ENCODE measurements at regions of chr17 and their contacts with region 1.

Region 1: DNA sequence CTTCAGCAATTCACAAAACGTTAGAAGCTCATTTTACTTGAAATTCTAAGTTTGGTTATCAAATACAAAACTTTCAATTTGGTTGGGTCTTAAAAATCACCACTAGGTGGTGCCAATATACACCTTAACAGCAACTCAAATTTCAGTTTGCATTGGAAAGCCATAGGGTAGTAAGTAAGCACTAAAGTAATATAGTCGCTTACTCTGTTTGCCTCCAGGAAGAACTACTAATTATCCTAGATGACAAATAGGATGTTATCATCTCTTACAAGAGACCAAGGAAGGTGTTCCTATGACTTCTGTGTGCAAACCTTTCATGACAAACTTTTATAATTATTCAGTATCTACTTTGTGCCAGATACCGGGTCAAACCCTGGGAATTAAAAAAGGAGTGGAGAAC is 93.3 kb downstream of the MYO1D start:
- DNase-seq: peak in 3 of 14 experiments; percentile 64 to 67 (median 67)
- ATAC-seq: peak; percentile 52
- H3K4me3 ChIP-seq: no peak overlapping the region
- H3K4me3 Mint-ChIP-seq: no peak overlapping the region
- H3K27ac ChIP-seq: no peak overlapping the region
- H3K27ac Mint-ChIP-seq: no peak overlapping the region
- H3K4me1 ChIP-seq: no peaks in the 10 kb centered on the region
- H3K4me1 Mint-ChIP-seq: no peaks in the 10 kb centered on the region
- H3K27me3 ChIP-seq: no peaks in the 10 kb centered on the region
- H3K27me3 Mint-ChIP-seq: no peaks in the 10 kb centered on the region
- CTCF ChIP-seq: peak; percentile 86

Region 2: DNA sequence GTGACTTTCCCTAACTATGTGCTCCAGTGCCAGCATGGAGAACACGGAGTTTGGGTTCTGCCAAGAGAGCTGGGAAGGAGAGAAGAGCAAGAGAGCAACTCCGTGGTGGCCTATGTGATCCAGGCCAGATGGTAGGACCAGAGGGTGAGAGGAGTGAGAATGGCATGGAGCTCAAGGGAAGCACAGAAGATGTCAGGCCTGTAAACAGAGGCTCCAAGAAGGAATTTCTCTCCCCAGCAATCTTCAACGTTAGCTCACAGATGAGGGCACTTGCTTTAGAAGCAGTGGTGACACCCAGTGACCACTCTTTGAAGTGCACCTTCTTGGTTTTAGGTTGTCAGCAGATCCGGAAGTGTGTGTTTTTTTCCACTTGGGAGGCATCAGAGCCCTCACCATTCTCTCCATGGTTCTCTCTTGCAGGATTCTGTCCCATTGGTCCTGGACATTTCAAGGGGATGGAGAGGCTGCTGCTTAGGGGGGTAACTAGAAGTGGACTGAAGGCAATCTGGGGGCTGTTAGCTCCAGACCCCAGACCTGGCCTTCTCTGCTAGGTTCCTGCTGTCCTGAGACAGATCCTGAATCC is 126.3 kb after region 1 on chr17:
- CTCF ChIA-PET with region 1: interaction called, 10 read pairs
- POLR2A ChIA-PET with region 1: interaction called, 3 read pairs
- intact Hi-C with region 1: loop called in 1 of 2 experiments (anchors 1 kb)
- DNase-seq: peak in 11 of 14 experiments; percentile 5 to 68 (median 22)
- ATAC-seq: peak; percentile 48
- H3K4me3 ChIP-seq: no peak overlapping the region
- H3K4me3 Mint-ChIP-seq: no peak overlapping the region
- H3K27ac ChIP-seq: no peak overlapping the region
- H3K27ac Mint-ChIP-seq: no peak overlapping the region
- H3K4me1 ChIP-seq: no peaks in the 10 kb centered on the region
- H3K4me1 Mint-ChIP-seq: no peaks in the 10 kb centered on the region
- H3K27me3 ChIP-seq: no peaks in the 10 kb centered on the region
- H3K27me3 Mint-ChIP-seq: peaks cover 24% of the 10 kb centered on the region
- CTCF ChIP-seq: peak; percentile 44

Region 3: GRCh38 chr17:32936894-32937500 is 153.4 kb after region 1 on chr17:
- CTCF ChIA-PET with region 1: interaction called, 4 read pairs
- POLR2A ChIA-PET with region 1: no interaction called
- intact Hi-C with region 1: loop called (anchors 1 kb)
- DNase-seq: peak; percentile 42 to 77 (median 54)
- ATAC-seq: peak; percentile 55
- H3K4me3 ChIP-seq: no peak overlapping the region
- H3K4me3 Mint-ChIP-seq: no peak overlapping the region
- H3K27ac ChIP-seq: no peak overlapping the region
- H3K27ac Mint-ChIP-seq: no peak overlapping the region
- H3K4me1 ChIP-seq: peaks cover 7% of the 10 kb centered on the region
- H3K4me1 Mint-ChIP-seq: peaks cover 4% of the 10 kb centered on the region
- H3K27me3 ChIP-seq: peaks cover 16 to 17% of the 10 kb centered on the region in 2 experiments
- H3K27me3 Mint-ChIP-seq: peaks cover 56% of the 10 kb centered on the region
- CTCF ChIP-seq: peak; percentile 71

Region 4: GRCh38 chr17:33750943-33751701 is 967.5 kb after region 1 on chr17:
- CTCF ChIA-PET with region 1: no interaction called
- POLR2A ChIA-PET with region 1: no interaction called
- intact Hi-C with region 1: loop called in 1 of 2 experiments (anchors 10 kb)
- DNase-seq: peak; percentile 26 to 69 (median 50)
- ATAC-seq: peak; percentile 68
- H3K4me3 ChIP-seq: no peak overlapping the region
- H3K4me3 Mint-ChIP-seq: no peak overlapping the region
- H3K27ac ChIP-seq: no peak overlapping the region
- H3K27ac Mint-ChIP-seq: no peak overlapping the region
- H3K4me1 ChIP-seq: no peaks in the 10 kb centered on the region
- H3K4me1 Mint-ChIP-seq: peaks cover 10% of the 10 kb centered on the region
- H3K27me3 ChIP-seq: peaks cover 19 to 37% of the 10 kb centered on the region in 2 experiments
- H3K27me3 Mint-ChIP-seq: peaks cover 63% of the 10 kb centered on the region
- CTCF ChIP-seq: peak; percentile 96

Measured in CD4-positive, alpha-beta T cell (primary cell).